Cardiac septum (tissue), 1 donor: ENCODE measurements at regions of chr15 and their contacts with region 1.

Region 1: DNA sequence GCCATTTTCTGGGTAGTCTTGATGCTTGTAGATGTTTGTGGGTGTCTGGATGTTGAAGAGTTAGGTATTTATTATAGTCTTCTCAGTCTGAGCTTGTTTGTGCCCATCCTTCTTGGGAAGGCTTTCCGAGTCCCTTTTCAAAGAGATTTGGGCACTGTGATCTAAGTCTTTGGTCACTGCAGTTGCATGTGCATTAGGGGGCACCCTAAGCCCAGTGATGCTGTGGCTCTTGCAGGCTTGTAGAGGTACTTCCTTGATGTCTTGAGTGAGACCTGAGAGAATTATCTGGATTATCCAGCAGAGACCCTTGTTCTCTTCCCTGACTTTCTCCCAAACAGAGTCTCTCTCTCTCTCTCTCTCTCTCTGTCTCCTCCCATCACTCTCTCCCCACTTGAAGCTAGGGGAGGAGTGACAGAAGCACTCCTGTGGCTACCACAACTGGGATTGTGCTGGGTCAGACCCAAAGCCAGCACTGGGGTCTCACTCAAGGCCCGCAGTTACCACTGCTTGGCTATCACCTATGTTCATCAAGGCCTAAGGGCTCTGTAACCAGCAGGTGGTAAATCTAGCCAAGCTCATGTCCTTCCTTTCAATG is 68.5 kb downstream of the TMCO5A start:
- DNase-seq: no peak

Region 2: DNA sequence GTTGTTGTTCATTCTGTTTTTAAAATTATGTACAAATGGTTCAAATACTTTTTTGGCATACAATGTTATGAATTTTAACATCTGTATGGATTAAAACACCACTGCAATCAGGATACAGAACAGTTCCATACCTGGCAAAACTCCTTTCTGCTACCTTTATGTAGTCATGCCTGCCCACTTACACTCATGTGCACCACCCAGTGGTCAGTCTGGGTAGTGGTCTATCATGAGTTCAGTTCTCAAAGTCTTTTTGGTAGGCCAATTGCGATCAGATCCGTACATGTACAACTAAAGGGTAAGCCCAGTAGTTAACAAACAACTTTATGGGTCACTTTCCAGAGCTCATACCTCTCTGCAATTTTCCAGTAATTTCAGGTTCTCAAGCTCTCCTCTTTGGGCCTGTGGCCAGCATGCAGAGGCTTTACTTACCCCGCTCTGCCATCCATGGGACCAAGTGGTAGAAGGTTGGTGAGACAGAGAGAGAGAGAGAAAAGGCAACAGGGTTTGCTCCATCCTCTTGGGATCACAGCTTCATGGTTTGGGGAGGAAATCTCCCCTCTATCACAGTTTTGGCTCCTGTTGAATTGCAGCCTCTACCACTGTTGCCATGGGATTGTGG is 387.1 kb after region 1 on chr15:
- intact Hi-C with region 1: loop called (anchors 10 kb)
- DNase-seq: no peak

Region 3: GRCh38 chr15:38490242-38490922 is 487.4 kb after region 1 on chr15:
- intact Hi-C with region 1: no loop called
- DNase-seq: no peak